ENCODE measurements at regions of chr9 and their contacts with region 1.

Region 1: DNA sequence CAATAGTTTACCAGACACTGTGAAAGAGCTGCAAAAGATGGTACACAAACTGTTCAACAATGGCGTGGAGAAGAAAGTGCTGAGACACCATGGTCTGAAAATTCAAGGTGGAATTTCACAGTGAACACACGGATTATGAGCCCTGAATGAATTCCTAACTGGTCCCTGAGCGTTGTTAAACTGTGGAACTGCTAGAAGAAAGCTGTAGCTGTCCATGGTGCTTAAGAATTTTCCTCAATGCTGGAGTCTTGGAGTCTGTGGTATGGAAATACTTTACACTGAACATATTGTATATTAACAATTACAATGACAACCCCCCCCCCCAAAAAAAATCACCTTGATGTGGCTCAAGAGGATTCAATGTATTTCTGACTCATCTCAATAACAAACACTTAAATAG is 68.5 kb downstream of the SLC24A2 start:
- DNase-seq: peak; percentile 1 to 8 (median 3)
- H3K4me3 ChIP-seq: no peak overlapping the region
- H3K27ac ChIP-seq: no peak overlapping the region
- H3K4me1 ChIP-seq: no peaks in the 10 kb centered on the region
- H3K27me3 ChIP-seq: peaks cover 0 to 4% (median 2%) of the 10 kb centered on the region in 5 experiments

Region 2: DNA sequence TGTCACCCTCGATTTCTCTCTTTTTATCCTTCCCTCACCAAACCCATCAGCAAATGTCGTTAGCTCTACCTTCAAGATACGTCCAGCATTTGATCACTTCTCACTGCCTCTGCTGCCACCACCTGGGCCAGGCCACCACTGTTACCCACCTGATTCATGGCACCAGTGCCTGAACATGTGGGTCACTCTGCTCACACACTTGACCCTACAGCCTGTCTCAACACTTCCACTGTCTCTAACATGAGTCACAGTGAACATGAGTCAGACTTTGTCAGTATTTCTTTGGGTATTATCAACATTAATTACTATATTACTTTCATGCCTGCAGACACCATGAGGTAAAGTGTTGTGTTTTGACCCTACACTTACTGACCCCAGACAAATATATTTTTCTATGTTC is 48.8 kb after region 1 on chr9:
- CTCF ChIA-PET with region 1: no interaction called
- POLR2A ChIA-PET with region 1: interaction called, 10 read pairs
- DNase-seq: no peak
- H3K4me3 ChIP-seq: no peak overlapping the region
- H3K27ac ChIP-seq: no peak overlapping the region
- H3K4me1 ChIP-seq: no peaks in the 10 kb centered on the region
- H3K27me3 ChIP-seq: no peaks in the 10 kb centered on the region